ENCODE measurements at regions of chr10 and their contacts with region 1.

Region 1: DNA sequence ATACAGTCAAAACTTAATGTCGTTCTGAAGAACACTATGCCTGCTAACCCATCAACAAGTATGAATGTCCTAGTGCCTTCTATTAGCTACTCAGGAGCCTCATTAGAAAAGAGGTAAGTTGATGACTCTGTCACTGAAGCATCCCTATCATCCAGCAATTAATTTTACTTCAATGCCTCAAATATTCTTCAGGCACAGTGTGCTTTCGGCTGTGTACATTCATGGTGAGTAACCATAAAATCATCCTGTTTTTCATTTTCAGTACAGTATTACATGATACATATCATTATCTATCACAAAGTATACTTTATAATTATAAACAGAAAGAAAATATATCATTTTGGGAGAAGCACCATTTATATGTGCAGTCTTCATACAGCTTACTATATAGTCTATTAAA is 495.5 kb upstream of the ZWINT start:
- DNase-seq: peak; percentile 56
- ATAC-seq: peak; percentile 95
- H3K4me3 ChIP-seq: no peak overlapping the region
- H3K27ac ChIP-seq: no peak overlapping the region
- H3K4me1 ChIP-seq: no peaks in the 10 kb centered on the region
- H3K27me3 ChIP-seq: no peaks in the 10 kb centered on the region
- CTCF ChIP-seq: no peak

Region 2: DNA sequence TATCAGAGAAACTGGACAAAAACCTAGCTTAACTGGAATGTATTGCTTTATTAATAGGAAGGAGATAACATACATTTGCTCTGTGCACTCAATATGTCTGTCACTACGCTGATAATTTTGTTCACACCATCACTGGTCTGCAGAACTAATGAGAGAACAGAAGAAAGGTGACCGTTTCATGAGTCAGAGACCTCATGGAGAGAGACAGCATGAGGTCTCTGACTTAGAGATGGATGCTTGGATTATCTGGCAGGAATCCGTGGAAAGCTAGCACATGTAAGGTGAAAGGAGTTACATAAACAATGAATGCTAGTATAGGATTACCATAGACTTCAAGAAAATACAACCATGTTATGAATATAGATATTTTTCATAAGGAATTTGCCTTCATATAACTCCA is 463.8 kb after region 1 on chr10:
- CTCF ChIA-PET with region 1: no interaction called
- POLR2A ChIA-PET with region 1: no interaction called
- intact Hi-C with region 1: loop called (anchors 10 kb)
- DNase-seq: no peak
- ATAC-seq: no peak
- H3K4me3 ChIP-seq: no peak overlapping the region
- H3K27ac ChIP-seq: no peak overlapping the region
- H3K4me1 ChIP-seq: no peaks in the 10 kb centered on the region
- H3K27me3 ChIP-seq: no peaks in the 10 kb centered on the region
- CTCF ChIP-seq: no peak

Measured in PC-3 (cell line).